Posterior vena cava (tissue), 2 donors: ENCODE measurements at regions of chr2 and their contacts with region 1.

Region 1: GRCh38 chr2:219619235-219619634 is 8.2 kb upstream of the SLC4A3 start:
- DNase-seq: no peak

Region 2: DNA sequence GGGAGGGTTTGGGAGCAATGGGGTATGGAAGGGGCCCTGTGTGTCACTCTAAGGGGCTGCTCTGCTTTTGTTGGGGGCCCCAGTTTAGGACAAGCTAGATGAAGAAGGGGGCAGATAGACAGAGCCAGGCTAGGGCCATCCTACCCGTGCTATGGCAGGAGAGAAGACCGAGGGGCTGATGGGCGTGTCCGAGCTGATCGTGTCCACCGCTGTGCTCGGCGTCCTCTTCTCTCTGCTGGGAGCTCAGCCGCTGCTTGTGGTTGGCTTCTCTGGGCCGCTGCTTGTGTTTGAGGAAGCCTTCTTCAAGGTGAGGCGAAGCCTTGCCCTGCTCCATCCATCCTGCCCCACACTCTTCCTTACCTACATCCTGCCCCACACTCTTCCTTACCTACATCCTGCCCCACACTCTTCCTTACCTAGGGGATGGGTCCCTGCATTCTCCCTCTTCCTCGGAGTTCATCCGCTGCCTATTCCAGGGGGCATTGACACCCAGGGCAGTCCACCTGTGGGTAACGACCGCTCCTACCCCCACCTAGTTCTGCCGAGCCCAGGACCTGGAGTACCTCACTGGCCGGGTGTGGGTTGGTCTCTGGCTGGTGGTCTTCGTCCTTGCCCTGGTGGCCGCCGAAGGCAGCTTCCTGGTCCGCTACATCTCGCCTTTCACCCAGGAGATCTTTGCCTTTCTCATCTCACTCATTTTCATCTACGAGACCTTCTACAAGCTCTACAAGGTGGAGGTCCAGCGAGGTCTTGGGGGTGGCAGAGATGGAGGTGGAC is 17.1 kb after region 1 on chr2:
- intact Hi-C with region 1: loop called in 1 of 2 experiments (anchors 2 kb)
- DNase-seq: peak; percentile 72